Heart left ventricle (tissue), 16 donors: ENCODE measurements at regions of chr6 and their contacts with region 1.

Region 1: DNA sequence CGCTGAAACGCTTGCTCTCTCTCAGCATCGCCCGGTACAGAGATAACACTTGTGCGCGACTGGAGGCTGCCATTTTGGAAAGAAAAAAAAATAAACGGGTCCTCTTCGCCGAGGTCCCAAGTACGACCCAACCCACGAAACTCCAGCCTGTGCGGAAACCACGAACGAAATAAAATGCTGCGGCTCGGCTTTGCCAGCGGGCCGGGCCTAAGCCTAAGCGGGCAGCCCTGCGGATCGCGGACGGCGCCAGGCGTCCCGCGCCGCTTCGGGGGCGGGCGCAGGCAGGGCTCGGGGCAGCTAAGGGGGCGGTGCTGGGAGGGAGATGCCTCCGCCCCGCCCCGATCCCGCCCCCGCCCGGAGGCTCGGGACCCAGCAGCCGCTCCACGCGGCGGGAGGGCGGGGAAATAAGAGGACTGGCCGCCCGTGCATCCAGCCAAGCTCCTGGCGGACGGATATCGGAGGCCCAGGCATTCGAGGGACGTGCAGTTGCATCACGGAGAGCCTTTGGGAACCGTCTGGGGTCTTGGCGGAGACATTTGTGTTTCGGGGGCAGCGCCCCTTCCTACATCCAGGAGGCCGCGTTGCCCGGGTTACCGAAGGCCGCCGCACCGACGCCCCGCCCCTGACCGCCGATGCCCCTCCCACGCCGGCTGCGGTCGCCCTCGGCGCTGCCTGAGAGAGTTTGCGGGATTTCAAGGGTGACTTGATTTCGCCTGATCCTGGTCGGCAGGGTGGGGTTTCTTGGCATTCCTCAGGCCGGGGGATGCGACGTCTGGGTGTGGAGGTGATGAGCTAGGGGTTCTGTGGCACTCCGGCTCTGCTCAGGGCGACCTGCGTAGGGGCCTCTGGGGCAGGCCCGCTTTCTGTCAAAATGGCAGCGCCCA is at the starts of genes FARS2 and LYRM4:
- DNase-seq: peak; percentile 90 to 95 (median 93)
- ATAC-seq: peak; percentile 89 to 99 (median 98)
- H3K4me3 ChIP-seq: peak within 1 kb of the TSS; percentile 67 to 91 (median 81)
- H3K27ac ChIP-seq: peak within 1 kb of the TSS; percentile 92 to 100 (median 98)
- H3K4me1 ChIP-seq: peaks cover 0 to 26% (median 16%) of the 10 kb centered on the region in 12 donors
- H3K27me3 ChIP-seq: no peaks in the 10 kb centered on the region
- CTCF ChIP-seq: peak in 6 of 12 donors; percentile 13 to 58 (median 22)
- POLR2A ChIP-seq: peak in 1 of 2 donors; percentile 43
- total RNA-seq, gene FARS2: 17.1 to 24.6 (median 20.5) TPM
- total RNA-seq, gene LYRM4: 18.8 to 39.7 (median 21.3) TPM

Region 2: DNA sequence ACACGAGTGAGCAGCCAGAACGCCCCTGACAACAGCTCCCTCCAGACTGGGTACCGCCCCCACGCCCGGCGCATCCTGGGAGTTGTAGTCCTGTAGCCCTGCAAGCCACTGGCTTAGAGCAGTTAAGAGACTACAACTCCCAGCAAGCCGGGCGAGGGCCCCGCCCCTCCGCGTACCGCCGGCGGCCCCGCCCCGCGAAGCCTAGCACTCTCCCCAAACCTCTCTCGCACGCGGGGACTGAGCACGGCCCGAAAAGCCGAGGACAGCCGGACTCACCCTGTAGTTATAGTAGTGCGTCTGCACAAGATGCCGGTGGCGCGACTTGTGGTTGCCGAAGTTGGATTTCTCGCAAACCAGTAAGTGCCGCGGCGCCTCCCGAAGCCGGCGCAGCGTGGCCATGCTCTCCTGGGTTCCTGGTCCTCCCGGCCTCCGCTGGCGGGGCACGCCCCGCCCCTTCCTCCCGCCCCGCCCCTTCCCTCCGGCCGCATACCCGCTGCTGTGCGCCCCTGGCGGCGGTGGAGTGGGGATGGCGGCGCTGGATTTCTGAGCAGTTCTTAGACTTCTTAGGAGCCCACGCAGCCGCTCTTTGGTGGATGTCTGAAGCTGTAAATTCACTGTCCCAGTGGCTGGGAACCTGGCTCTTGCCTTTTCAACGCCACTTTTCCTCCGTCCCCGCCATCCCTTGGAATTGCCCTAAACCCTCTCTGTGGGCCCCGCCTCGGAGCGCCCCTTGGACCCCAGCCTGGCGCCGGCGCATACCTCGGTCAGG is 257.1 kb before region 1 on chr6 and contains the start of gene RPP40:
- intact Hi-C with region 1: loop called in 1 of 10 experiments (anchors 10 kb)
- DNase-seq: peak; percentile 97 to 99 (median 97)
- ATAC-seq: peak; percentile 98 to 100 (median 100)
- H3K4me3 ChIP-seq: peak within 1 kb of the TSS; percentile 34 to 90 (median 70)
- H3K27ac ChIP-seq: peak within 1 kb of the TSS; percentile 60 to 96 (median 89)
- H3K4me1 ChIP-seq: peaks cover 0 to 8% (median 5%) of the 10 kb centered on the region in 12 donors
- H3K27me3 ChIP-seq: no peaks in the 10 kb centered on the region
- CTCF ChIP-seq: peak; percentile 77 to 96 (median 88)
- POLR2A ChIP-seq: peak in 1 of 2 donors; percentile 28
- total RNA-seq, gene RPP40: 1.8 to 7.0 (median 3.5) TPM

Region 3: GRCh38 chr6:5174244-5174643 is 86.7 kb before region 1 on chr6:
- intact Hi-C with region 1: no loop called
- DNase-seq: no peak
- ATAC-seq: peak in 3 of 4 donors; percentile 37 to 78 (median 39)
- H3K4me3 ChIP-seq: peak overlapping the region in 5 of 12 donors; percentile 7 to 31 (median 15)
- H3K27ac ChIP-seq: peak overlapping the region in 9 of 12 donors; percentile 8 to 59 (median 41)
- H3K4me1 ChIP-seq: peaks cover 0 to 12% (median 4%) of the 10 kb centered on the region in 12 donors
- H3K27me3 ChIP-seq: no peaks in the 10 kb centered on the region
- CTCF ChIP-seq: no peak
- POLR2A ChIP-seq: no peak

Region 4: GRCh38 chr6:5205877-5206850 is 54.7 kb before region 1 on chr6:
- intact Hi-C with region 1: loop called in 2 of 10 experiments (anchors 5 kb)
- DNase-seq: peak; percentile 69 to 76 (median 72)
- ATAC-seq: peak; percentile 85 to 90 (median 90)
- H3K4me3 ChIP-seq: no peak overlapping the region
- H3K27ac ChIP-seq: peak overlapping the region; percentile 59 to 93 (median 82)
- H3K4me1 ChIP-seq: peaks cover 17 to 71% (median 50%) of the 10 kb centered on the region in 12 donors
- H3K27me3 ChIP-seq: no peaks in the 10 kb centered on the region
- CTCF ChIP-seq: no peak
- POLR2A ChIP-seq: no peak

Region 5: DNA sequence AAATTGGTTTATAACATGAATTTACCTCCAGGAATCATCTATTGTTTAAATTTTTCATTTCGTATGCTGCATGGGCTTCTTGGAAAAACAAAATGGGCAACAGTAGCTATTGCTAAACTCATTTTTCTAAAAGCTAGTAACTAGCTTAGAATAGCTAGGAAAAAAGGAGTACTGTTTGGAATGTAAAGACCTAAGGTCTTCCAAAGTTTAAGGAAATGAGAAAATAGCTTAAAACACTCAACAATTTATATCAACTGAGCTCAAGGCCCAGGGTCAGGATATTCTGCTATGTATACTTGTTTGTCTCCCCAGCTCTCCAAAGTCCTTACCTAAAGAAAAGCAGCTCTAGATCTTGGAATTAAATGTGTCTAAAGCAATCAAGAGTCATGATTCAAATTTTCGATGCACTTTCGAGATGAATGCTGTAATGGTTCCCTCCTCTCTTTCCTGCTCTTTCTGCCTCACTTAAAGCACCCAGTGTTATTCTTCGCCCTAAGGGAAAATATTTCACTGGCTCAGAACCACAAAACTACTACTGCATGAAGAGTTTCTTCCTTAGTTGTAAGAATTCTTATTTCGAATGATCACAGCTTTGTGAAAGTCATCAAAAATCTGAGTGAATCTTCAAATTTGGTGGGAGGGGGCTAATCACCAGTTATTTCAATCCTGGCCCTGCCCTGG is 41.8 kb before region 1 on chr6:
- intact Hi-C with region 1: no loop called
- DNase-seq: no peak
- ATAC-seq: no peak
- H3K4me3 ChIP-seq: no peak overlapping the region
- H3K27ac ChIP-seq: no peak overlapping the region
- H3K4me1 ChIP-seq: peaks cover 0 to 17% (median 7%) of the 10 kb centered on the region in 12 donors
- H3K27me3 ChIP-seq: no peaks in the 10 kb centered on the region
- CTCF ChIP-seq: no peak
- POLR2A ChIP-seq: no peak

Region 6: GRCh38 chr6:5361396-5361795 is 100.5 kb after region 1 on chr6:
- intact Hi-C with region 1: loop called in 1 of 10 experiments (anchors 10 kb)
- DNase-seq: no peak
- ATAC-seq: no peak
- H3K4me3 ChIP-seq: no peak overlapping the region
- H3K27ac ChIP-seq: no peak overlapping the region
- H3K4me1 ChIP-seq: peaks cover 0 to 15% (median 5%) of the 10 kb centered on the region in 12 donors
- H3K27me3 ChIP-seq: no peaks in the 10 kb centered on the region
- CTCF ChIP-seq: no peak
- POLR2A ChIP-seq: no peak

Region 7: DNA sequence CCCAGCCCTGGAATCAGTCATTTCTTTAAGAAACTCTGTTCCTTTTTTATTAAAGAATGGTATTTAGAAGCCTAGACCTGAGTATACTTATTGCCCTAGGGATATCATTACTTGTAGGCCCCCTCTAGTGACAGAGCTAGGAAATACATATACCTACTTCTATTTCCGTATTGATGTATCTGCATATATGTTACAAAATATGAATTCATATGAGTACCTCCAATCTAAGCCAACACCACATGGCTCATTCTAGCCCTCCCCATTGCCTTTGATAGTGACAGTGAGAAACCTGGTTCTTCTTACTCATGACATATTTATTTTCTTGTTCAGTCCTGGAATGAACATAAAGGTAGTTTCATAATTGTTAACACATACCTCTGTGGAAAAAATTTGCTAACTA is 137.6 kb after region 1 on chr6:
- intact Hi-C with region 1: loop called in 2 of 10 experiments (anchors 5 kb)
- DNase-seq: no peak
- ATAC-seq: no peak
- H3K4me3 ChIP-seq: no peak overlapping the region
- H3K27ac ChIP-seq: no peak overlapping the region
- H3K4me1 ChIP-seq: peaks cover 0 to 7% (median 0%) of the 10 kb centered on the region in 12 donors
- H3K27me3 ChIP-seq: no peaks in the 10 kb centered on the region
- CTCF ChIP-seq: peak; percentile 28 to 61 (median 43)
- POLR2A ChIP-seq: no peak